Activated naive CD4-positive, alpha-beta T cell treated with anti-CD3 and anti-CD28 coated beads for 36 hours (primary cell): ENCODE measurements at regions of chr16 and their contacts with region 1.

Region 1: DNA sequence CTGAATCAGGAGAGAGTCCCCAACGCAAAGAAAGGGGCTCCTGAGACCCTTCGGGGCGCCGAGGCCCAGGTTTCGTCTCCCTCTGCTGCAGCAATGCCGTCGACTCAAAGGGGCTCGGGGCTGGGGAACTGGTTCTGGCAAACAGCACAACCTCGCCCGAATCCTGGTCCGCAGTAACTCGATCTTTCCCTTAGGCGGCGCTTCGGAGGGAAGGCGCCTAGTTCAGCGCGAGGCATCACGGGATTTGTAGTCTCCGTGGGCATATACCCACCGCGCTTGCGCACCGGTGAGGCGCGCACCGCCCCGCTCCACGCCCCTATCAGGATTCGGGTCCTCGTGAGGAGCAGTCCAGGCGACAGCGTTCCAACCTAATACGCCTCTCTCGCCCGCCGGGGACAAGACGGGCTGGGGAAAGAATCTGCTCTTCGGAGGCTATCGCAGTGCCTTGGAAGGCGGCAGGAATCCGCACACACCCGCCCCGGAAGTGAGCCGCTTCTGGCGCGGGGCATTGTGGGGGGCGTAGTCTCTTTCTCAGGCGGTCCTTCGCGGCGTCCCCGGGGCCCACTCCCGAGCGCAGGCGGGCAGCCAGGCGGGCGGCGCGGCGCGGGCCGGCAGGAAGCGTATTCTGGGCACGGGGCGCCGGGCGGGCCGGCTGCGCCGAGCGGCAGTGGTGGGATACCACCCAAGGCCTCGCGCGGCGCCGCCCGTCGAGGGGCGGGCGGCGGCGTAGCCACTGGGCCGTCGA is at the start of gene THAP11:
- DNase-seq: peak; percentile 97
- H3K4me3 Mint-ChIP-seq: peak within 1 kb of the TSS; percentile 91
- H3K27ac Mint-ChIP-seq: peak within 1 kb of the TSS; percentile 98
- H3K4me1 Mint-ChIP-seq: peaks cover 33% of the 10 kb centered on the region
- H3K27me3 Mint-ChIP-seq: no peaks in the 10 kb centered on the region
- total RNA-seq, gene THAP11: 19.9 to 20.6 TPM

Region 2: DNA sequence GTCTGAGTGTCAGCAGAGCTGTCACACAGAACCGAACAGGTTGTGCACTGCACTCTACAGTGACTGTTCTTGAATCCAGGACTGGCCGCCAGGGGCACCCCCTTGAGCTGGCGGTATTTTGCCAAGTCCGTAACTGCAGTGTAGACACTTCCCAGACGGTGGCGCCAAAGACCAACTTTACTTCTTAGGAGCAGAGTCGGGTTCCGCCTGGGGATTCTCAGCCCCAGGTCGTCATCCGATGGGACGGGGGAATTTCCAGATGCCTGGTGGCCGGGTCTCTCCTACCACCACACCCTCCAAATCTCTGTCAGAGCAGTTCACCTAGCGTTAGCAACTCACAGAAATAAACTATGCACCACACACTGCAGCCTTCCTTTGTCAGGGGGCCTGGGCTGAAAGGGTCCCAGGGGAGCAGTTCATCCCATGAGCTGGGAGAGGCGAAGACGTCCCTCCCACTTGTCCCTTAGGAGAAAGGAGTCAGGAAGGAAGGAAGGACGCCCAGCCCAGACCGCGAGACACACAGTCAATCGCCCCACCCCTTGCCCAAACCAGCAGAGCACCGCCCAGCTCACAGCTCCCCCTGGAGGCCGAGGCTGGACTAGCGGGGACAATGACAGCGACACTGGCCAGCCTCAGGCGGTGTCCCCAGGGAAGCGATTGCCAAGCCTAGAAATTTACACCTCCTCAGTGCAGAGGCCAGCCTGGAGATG is 320.7 kb before region 1 on chr16:
- CTCF ChIA-PET with region 1: interaction called, 3 read pairs
- intact Hi-C with region 1: loop called (anchors 2 kb)
- DNase-seq: peak; percentile 100
- H3K4me3 Mint-ChIP-seq: peak overlapping the region; percentile 84
- H3K27ac Mint-ChIP-seq: peak overlapping the region; percentile 96
- H3K4me1 Mint-ChIP-seq: peaks cover 11% of the 10 kb centered on the region
- H3K27me3 Mint-ChIP-seq: no peaks in the 10 kb centered on the region

Region 3: DNA sequence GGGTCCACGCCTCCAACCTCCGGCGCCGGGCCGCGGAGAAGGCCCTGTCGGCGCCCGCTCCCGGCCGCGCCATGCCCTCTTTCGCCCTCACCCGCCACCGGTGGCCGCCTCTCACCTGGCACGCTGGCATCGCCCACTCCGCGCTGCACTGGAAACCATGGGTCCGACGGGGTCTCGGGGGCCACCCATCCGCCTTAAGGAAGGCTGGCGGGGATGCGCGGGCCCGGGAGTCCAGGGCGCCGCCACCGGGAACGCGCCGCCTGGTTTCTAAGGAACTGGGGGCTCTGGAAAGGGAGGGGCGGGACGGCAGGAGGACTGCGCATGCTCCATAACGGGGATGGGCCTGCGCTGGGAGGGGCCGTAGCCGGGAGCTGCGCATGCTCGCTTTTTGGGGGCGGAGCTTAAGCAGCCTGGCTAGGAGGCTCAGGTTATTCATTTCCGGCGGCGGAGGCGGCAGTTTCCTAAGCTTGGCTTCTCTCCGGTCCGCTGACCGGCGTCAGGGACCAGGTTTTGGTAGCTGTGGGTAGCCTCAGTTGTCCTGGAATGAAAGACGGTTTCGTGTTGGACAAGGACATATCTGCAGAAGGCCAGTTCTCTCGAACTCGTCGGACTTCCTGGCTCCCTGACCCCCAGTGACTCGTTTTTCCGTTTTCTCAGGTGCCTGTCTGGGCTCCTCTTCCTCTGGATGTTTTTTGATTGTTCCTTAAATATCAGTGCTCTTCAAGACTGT is 122.7 kb before region 1 on chr16 and contains the start of gene GFOD2:
- CTCF ChIA-PET with region 1: no interaction called
- intact Hi-C with region 1: loop called (anchors 2 kb)
- DNase-seq: peak; percentile 99
- H3K4me3 Mint-ChIP-seq: peak within 1 kb of the TSS; percentile 96
- H3K27ac Mint-ChIP-seq: peak within 1 kb of the TSS; percentile 96
- H3K4me1 Mint-ChIP-seq: peaks cover 36% of the 10 kb centered on the region
- H3K27me3 Mint-ChIP-seq: no peaks in the 10 kb centered on the region
- total RNA-seq, gene GFOD2: 7.3 to 8.2 TPM

Region 4: DNA sequence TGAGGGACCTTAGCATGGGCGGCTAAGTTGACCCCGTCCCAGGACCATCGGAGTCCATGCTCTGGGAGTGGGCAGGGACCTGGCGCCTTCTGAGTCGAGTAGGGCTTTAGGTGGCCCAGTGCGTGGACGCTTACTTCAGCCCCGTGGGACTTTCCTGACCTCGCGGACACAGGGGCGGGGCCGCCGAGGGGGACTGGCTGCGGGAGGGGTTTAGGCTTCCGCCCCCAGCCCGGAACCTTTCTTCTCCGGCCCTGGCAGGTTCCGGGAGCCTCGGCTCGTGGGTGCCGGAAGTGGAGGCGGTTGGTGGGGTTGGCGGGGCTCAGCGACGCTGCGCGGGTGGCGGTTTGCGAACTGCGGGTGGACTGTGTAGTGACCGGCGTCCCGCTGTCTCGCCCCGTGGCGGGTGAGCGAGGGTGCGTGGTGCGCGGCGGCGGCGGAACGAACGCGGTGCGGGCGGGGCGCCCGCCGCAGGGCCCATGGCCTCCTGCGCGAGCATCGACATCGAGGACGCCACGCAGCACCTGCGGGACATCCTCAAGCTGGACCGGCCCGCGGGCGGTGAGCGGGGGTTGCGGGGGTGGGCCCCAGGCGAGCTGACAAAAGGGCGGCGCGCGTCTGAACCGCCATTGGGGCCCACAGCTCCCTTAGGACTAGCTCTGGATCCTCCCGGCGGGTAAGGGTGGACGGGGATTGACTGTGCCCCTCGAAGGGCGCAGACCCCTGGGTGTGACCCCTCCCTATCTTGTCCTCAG is 31.0 kb after region 1 on chr16 and contains the start of gene EDC4:
- CTCF ChIA-PET with region 1: interaction called, 3 read pairs
- intact Hi-C with region 1: loop called (anchors 1 kb)
- DNase-seq: peak; percentile 86
- H3K4me3 Mint-ChIP-seq: peak within 1 kb of the TSS; percentile 92
- H3K27ac Mint-ChIP-seq: peak within 1 kb of the TSS; percentile 87
- H3K4me1 Mint-ChIP-seq: peaks cover 27% of the 10 kb centered on the region
- H3K27me3 Mint-ChIP-seq: no peaks in the 10 kb centered on the region
- total RNA-seq, gene EDC4: 72.2 to 78.7 TPM

Region 5: GRCh38 chr16:67968400-67969253 is 126.7 kb after region 1 on chr16 and contains the start of gene SLC12A4:
- CTCF ChIA-PET with region 1: no interaction called
- intact Hi-C with region 1: loop called (anchors 1 kb)
- DNase-seq: peak; percentile 93
- H3K4me3 Mint-ChIP-seq: peak within 1 kb of the TSS; percentile 97
- H3K27ac Mint-ChIP-seq: peak within 1 kb of the TSS; percentile 78
- H3K4me1 Mint-ChIP-seq: peaks cover 10% of the 10 kb centered on the region
- H3K27me3 Mint-ChIP-seq: no peaks in the 10 kb centered on the region
- total RNA-seq, gene SLC12A4: 24.3 to 28.9 TPM